Activated CD4-positive, alpha-beta memory T cell treated with anti-CD3 and anti-CD28 coated beads for 36 hours (primary cell): ENCODE measurements at regions of chr11 and their contacts with region 1.

Region 1: DNA sequence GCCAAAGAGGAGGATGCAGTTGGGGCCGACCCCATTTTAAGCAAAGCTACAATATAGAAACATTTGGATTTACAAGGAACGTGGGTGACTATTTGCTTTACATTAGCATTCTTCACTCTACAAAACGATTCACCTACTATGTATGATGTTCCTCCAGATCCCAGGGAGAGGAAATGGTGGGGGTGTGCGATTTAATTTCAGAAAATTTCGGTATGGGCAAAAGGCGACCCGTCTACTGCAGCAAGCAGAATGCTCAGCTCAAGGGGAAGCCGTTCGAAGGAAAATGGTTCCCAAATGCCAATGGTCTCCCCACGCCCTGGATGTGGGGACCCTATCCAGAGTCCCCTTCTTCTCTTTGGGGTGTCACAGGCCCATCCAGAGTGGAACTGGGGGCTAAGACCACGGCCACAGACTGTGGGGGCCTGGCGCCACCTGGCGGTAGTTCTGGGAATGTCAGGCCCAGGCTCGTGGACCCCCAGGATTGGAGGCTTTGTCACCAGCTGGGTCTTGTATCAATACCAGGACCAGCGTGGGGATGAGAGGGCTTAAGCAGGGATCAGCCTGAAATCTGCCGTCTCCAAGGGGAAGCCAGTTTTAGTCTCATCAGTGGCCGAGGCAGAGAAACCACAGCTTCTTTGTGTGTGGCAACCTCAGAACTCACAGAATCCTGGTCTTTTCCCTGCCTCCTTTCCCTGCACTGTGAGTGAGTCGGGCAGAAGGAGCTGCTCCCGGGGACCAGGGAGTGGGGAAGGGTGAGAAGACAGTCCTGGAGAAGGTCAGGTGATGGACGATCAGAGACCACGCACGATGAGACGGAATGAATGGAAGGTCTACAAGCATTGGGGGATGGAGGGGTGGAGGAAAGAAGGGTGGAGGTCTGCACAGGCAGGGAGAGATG is 8.4 kb downstream of the LRRC10B start:
- DNase-seq: peak; percentile 60
- H3K4me3 Mint-ChIP-seq: peak overlapping the region; percentile 24
- H3K27ac Mint-ChIP-seq: no peak overlapping the region
- H3K4me1 Mint-ChIP-seq: peaks cover 7% of the 10 kb centered on the region
- H3K27me3 Mint-ChIP-seq: peaks cover 18% of the 10 kb centered on the region

Region 2: GRCh38 chr11:61437496-61437895 is 79.4 kb before region 1 on chr11:
- CTCF ChIA-PET with region 1: interaction called, 19 read pairs
- POLR2A ChIA-PET with region 1: no interaction called
- intact Hi-C with region 1: no loop called
- DNase-seq: no peak
- H3K4me3 Mint-ChIP-seq: no peak overlapping the region
- H3K27ac Mint-ChIP-seq: no peak overlapping the region
- H3K4me1 Mint-ChIP-seq: peaks cover 36% of the 10 kb centered on the region
- H3K27me3 Mint-ChIP-seq: no peaks in the 10 kb centered on the region

Region 3: GRCh38 chr11:61460474-61460881 is 56.4 kb before region 1 on chr11:
- CTCF ChIA-PET with region 1: interaction called, 14 read pairs
- POLR2A ChIA-PET with region 1: no interaction called
- intact Hi-C with region 1: no loop called
- DNase-seq: no peak
- H3K4me3 Mint-ChIP-seq: no peak overlapping the region
- H3K27ac Mint-ChIP-seq: no peak overlapping the region
- H3K4me1 Mint-ChIP-seq: no peaks in the 10 kb centered on the region
- H3K27me3 Mint-ChIP-seq: no peaks in the 10 kb centered on the region

Region 4: DNA sequence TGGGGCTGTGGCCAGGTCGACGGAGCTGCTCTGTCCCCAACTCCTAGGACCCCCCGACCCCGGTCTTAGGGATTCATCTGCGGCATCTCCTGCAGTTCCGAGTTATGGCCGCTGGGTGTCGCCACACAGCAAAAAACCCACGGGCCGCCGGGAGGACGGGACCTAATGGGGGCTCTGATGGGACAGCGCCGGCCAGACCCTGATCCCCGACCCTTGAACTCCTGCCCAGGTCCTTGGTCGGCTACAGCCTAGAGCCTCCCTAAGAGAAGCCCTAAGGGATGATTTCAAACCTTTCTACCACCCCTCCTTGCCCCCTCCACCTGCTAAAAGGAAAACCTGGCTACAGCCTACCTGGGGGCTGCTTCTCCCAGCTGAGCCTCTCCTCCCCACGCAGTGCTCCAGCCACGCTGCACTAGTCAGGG is 39.2 kb before region 1 on chr11:
- CTCF ChIA-PET with region 1: interaction called, 277 read pairs
- POLR2A ChIA-PET with region 1: interaction called, 3 read pairs
- intact Hi-C with region 1: loop called (anchors 1 kb)
- DNase-seq: peak; percentile 59
- H3K4me3 Mint-ChIP-seq: no peak overlapping the region
- H3K27ac Mint-ChIP-seq: no peak overlapping the region
- H3K4me1 Mint-ChIP-seq: peaks cover 9% of the 10 kb centered on the region
- H3K27me3 Mint-ChIP-seq: peaks cover 1% of the 10 kb centered on the region

Region 5: GRCh38 chr11:61488651-61489291 is 28.2 kb before region 1 on chr11:
- CTCF ChIA-PET with region 1: interaction called, 277 read pairs
- POLR2A ChIA-PET with region 1: no interaction called
- intact Hi-C with region 1: no loop called
- DNase-seq: no peak
- H3K4me3 Mint-ChIP-seq: no peak overlapping the region
- H3K27ac Mint-ChIP-seq: no peak overlapping the region
- H3K4me1 Mint-ChIP-seq: no peaks in the 10 kb centered on the region
- H3K27me3 Mint-ChIP-seq: no peaks in the 10 kb centered on the region

Region 6: DNA sequence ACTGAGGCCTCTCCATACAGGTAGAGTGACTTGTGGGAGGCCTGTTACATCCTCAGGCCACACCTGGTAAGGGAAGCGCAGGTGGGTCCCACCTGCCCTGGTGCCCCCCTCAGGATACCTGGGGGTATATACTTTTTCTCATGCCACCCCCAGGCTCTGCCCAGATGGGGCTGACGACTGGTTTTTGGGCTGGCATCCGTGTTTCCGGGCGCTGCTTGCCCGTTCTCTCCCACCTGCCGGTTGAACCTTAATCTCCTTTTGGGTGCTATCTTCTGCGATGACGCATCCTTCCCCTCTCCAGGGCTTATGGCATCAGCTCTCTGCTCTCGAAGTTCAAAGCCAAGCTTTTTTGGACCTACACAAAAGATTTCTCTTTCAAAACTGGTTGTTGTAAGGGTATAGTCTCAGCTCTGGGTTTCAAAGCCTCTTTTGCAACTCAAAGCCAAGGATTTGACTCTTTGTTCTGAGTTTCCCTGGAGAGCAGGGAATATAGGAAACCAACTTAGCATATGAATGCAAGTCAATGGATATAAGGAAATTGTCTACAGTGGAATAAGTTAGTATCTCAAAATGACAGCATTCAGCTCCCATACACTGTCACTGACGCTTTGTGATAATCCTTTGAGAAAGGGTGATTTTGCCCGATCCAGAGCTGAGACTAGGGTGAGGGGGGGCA is 17.0 kb before region 1 on chr11:
- CTCF ChIA-PET with region 1: interaction called, 49 read pairs
- POLR2A ChIA-PET with region 1: no interaction called
- intact Hi-C with region 1: no loop called
- DNase-seq: no peak
- H3K4me3 Mint-ChIP-seq: no peak overlapping the region
- H3K27ac Mint-ChIP-seq: no peak overlapping the region
- H3K4me1 Mint-ChIP-seq: no peaks in the 10 kb centered on the region
- H3K27me3 Mint-ChIP-seq: peaks cover 1% of the 10 kb centered on the region

Region 7: DNA sequence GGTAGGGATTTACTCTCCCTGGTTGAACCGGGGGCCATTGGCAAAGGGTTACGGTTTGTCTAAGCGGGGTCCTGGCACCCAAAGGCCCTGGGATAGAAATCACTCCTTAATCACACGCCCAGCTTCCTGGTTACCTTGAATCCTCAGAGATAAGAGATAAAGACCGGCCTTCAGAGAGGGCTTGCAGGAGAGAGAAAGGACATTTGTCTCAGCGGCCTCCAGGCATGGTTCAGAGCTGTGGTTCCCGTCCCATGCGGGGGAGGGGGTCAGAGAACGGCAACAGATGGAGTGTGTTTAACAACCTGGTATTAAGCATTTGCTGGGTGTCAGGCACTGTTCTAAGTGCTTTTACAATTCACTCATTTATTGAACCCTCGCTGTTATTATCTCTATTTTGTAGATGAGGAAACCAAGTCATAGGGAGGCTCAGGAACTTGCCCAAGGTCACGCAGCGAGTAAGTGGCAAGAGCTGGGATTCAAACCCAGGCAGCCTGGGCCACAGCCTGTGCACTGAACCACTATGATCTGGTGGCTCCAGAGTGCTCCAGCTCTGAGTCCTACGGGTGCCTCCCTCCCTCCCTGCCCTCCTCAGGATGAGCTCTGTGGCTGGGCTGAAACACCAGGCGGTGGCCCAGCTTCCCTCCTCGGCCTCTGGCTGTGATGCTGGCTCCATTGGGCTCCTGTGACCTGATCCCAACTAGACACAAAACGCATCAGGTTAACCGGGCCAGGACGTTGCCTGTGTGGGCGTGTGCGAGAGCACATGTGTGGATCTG is 10.2 kb after region 1 on chr11:
- CTCF ChIA-PET with region 1: interaction called, 30 read pairs
- POLR2A ChIA-PET with region 1: no interaction called
- intact Hi-C with region 1: no loop called
- DNase-seq: no peak
- H3K4me3 Mint-ChIP-seq: no peak overlapping the region
- H3K27ac Mint-ChIP-seq: no peak overlapping the region
- H3K4me1 Mint-ChIP-seq: no peaks in the 10 kb centered on the region
- H3K27me3 Mint-ChIP-seq: peaks cover 11% of the 10 kb centered on the region

Region 8: GRCh38 chr11:61769169-61769920 is 252.4 kb after region 1 on chr11:
- CTCF ChIA-PET with region 1: no interaction called
- POLR2A ChIA-PET with region 1: no interaction called
- intact Hi-C with region 1: no loop called
- DNase-seq: no peak
- H3K4me3 Mint-ChIP-seq: no peak overlapping the region
- H3K27ac Mint-ChIP-seq: no peak overlapping the region
- H3K4me1 Mint-ChIP-seq: peaks cover 4% of the 10 kb centered on the region
- H3K27me3 Mint-ChIP-seq: no peaks in the 10 kb centered on the region